ENCODE measurements at regions of chr1 and their contacts with region 1.

Region 1: DNA sequence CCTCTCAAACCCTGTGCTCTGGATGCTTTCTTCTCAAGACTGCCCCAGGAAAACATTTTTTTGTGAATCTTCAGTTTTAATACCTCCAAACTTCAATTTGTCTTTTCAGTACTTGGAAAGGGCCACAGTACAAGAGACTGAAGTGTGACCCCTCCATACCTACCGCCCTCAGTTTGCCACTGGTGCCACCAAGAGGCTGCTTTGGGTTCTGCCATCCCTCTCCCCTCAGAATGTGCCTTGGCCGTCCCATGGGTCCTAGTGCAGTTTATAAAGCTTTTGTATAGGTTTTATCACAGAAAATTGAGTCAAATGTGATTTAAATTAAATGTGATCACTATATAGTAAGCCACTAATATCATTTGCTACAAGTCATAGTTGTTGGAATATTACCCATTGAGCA is 60.8 kb upstream of the PGD start:
- DNase-seq: peak in 1 of 3 donors; percentile 35
- ATAC-seq: peak; percentile 84 to 94 (median 90)
- H3K4me3 ChIP-seq: no peak overlapping the region
- H3K27ac ChIP-seq: no peak overlapping the region
- H3K4me1 ChIP-seq: no peaks in the 10 kb centered on the region
- H3K27me3 ChIP-seq: no peaks in the 10 kb centered on the region
- CTCF ChIP-seq: peak; percentile 54 to 70 (median 65)
- POLR2A ChIP-seq: no peak

Region 2: GRCh38 chr1:10193288-10193687 is 144.8 kb before region 1 on chr1:
- intact Hi-C with region 1: no loop called
- DNase-seq: no peak
- ATAC-seq: no peak
- H3K4me3 ChIP-seq: no peak overlapping the region
- H3K27ac ChIP-seq: no peak overlapping the region
- H3K4me1 ChIP-seq: no peaks in the 10 kb centered on the region
- H3K27me3 ChIP-seq: no peaks in the 10 kb centered on the region
- CTCF ChIP-seq: no peak
- POLR2A ChIP-seq: no peak

Region 3: GRCh38 chr1:10209905-10210810 is 127.9 kb before region 1 on chr1 and contains the start of gene KIF1B:
- intact Hi-C with region 1: loop called (anchors 10 kb)
- DNase-seq: peak; percentile 99 to 100 (median 99)
- ATAC-seq: peak; percentile 91 to 98 (median 96)
- H3K4me3 ChIP-seq: peak within 1 kb of the TSS; percentile 78 to 89 (median 88)
- H3K27ac ChIP-seq: peak within 1 kb of the TSS; percentile 91 to 96 (median 95)
- H3K4me1 ChIP-seq: peaks cover 0 to 18% (median 8%) of the 10 kb centered on the region in 4 donors
- H3K27me3 ChIP-seq: no peaks in the 10 kb centered on the region
- CTCF ChIP-seq: peak; percentile 96 to 99 (median 98)
- POLR2A ChIP-seq: peak; percentile 99
- total RNA-seq, gene KIF1B: 21.7 to 29.4 (median 23.2) TPM

Region 4: GRCh38 chr1:10267319-10267718 is 70.7 kb before region 1 on chr1:
- intact Hi-C with region 1: no loop called
- DNase-seq: no peak
- ATAC-seq: peak in 1 of 4 donors; percentile 72
- H3K4me3 ChIP-seq: no peak overlapping the region
- H3K27ac ChIP-seq: no peak overlapping the region
- H3K4me1 ChIP-seq: peaks cover 0 to 11% (median 5%) of the 10 kb centered on the region in 4 donors
- H3K27me3 ChIP-seq: no peaks in the 10 kb centered on the region
- CTCF ChIP-seq: no peak
- POLR2A ChIP-seq: no peak

Region 5: GRCh38 chr1:10514490-10515235 is 176.6 kb after region 1 on chr1:
- intact Hi-C with region 1: no loop called
- DNase-seq: peak in 1 of 3 donors; percentile 39
- ATAC-seq: peak in 1 of 4 donors; percentile 10
- H3K4me3 ChIP-seq: no peak overlapping the region
- H3K27ac ChIP-seq: no peak overlapping the region
- H3K4me1 ChIP-seq: peaks cover 0 to 74% (median 26%) of the 10 kb centered on the region in 4 donors
- H3K27me3 ChIP-seq: no peaks in the 10 kb centered on the region
- CTCF ChIP-seq: peak; percentile 43 to 52 (median 48)
- POLR2A ChIP-seq: no peak

Measured in right lobe of liver (tissue), 6 donors.